GM12878 (cell line): ENCODE measurements at regions of chr2 and their contacts with region 1.

Region 1: DNA sequence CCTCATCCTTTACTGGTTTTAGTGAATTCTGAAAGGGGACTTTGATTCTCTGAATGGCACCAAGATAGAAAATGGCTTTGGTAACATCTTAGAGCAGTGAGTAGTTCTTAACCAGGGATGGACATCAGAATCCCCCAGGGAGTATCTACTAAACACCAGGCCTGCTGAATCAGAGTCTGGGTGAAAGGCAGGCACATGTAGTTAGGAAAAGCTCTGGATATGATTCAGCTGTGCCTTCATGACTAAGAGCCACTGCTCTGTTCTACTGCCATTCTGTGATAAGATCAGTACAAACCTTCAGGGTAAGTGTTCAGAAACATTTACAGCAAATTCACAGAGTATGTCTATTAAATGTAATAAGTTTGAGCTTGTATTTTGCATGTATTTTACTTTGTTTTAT is 46.2 kb upstream of the B3GNT2 start:
- DNase-seq: no peak
- ATAC-seq: peak; percentile 23
- H3K4me3 ChIP-seq: no peak overlapping the region; the same call in 1 of the 2 replicates
- H3K27ac ChIP-seq: peak overlapping the region; percentile 91
- H3K4me1 ChIP-seq: peaks cover 43% of the 10 kb centered on the region
- H3K27me3 ChIP-seq: no peaks in the 10 kb centered on the region
- CTCF ChIP-seq: no peak
- EP300 ChIP-seq: no peak
- POLR2A ChIP-seq: no peak
- RAD21 ChIP-seq: no peak

Region 2: DNA sequence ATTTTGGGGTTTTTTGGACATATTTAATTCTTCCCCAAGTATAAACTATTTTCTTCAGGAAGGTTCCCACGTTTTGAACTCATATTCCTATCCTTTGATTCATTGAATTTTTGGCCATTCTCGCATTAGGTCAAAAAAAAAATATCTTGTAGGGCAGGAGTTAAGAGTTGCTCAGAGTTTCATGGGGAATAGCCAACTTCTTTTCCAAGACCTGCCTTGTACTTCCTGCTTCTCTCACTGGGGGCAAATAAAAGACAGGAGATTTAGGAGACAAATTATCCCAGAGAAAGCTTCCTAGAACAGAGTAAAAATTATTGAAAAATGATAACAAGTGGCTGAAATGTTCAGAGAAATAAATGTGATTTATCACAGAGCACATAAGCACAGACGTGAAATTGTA is 1541.0 kb before region 1 on chr2:
- CTCF ChIA-PET with region 1: no interaction called
- POLR2A ChIA-PET with region 1: no interaction called
- RAD21 ChIA-PET with region 1: no interaction called
- SMC1A ChIA-PET with region 1: no interaction called
- in situ Hi-C with region 1: no loop called
- intact Hi-C with region 1: no loop called
- DNase-seq: no peak
- ATAC-seq: no peak
- H3K4me3 ChIP-seq: no peak overlapping the region
- H3K27ac ChIP-seq: no peak overlapping the region
- H3K4me1 ChIP-seq: no peaks in the 10 kb centered on the region
- H3K27me3 ChIP-seq: peaks cover 0 to 6% of the 10 kb centered on the region in 2 experiments; a peak in 2 of 4 replicates
- CTCF ChIP-seq: no peak
- EP300 ChIP-seq: no peak
- POLR2A ChIP-seq: no peak
- RAD21 ChIP-seq: no peak

Region 3: GRCh38 chr2:62014102-62014501 is 135.6 kb before region 1 on chr2:
- CTCF ChIA-PET with region 1: interaction called, 3 read pairs
- POLR2A ChIA-PET with region 1: no interaction called
- RAD21 ChIA-PET with region 1: interaction called, 10 read pairs
- SMC1A ChIA-PET with region 1: interaction called, 3 read pairs
- in situ Hi-C with region 1: no loop called
- intact Hi-C with region 1: no loop called
- DNase-seq: no peak
- ATAC-seq: peak; percentile 22; the same call in 1 of the 3 replicates
- H3K4me3 ChIP-seq: no peak overlapping the region
- H3K27ac ChIP-seq: no peak overlapping the region
- H3K4me1 ChIP-seq: peaks cover 8% of the 10 kb centered on the region; the same call in 1 of the 2 replicates
- H3K27me3 ChIP-seq: no peaks in the 10 kb centered on the region
- CTCF ChIP-seq: no peak
- EP300 ChIP-seq: no peak
- POLR2A ChIP-seq: no peak
- RAD21 ChIP-seq: no peak

Region 4: GRCh38 chr2:62055724-62056336 is 93.9 kb before region 1 on chr2:
- CTCF ChIA-PET with region 1: interaction called, 4 read pairs
- POLR2A ChIA-PET with region 1: no interaction called
- RAD21 ChIA-PET with region 1: interaction called, 13 read pairs
- SMC1A ChIA-PET with region 1: interaction called, 3 read pairs
- in situ Hi-C with region 1: no loop called
- intact Hi-C with region 1: no loop called
- DNase-seq: no peak
- ATAC-seq: peak; percentile 17; the same call in 2 of the 3 replicates
- H3K4me3 ChIP-seq: no peak overlapping the region
- H3K27ac ChIP-seq: no peak overlapping the region
- H3K4me1 ChIP-seq: peaks cover 18% of the 10 kb centered on the region
- H3K27me3 ChIP-seq: no peaks in the 10 kb centered on the region
- CTCF ChIP-seq: no peak
- EP300 ChIP-seq: no peak
- POLR2A ChIP-seq: no peak
- RAD21 ChIP-seq: no peak

Region 5: GRCh38 chr2:62195421-62196277 is 45.9 kb after region 1 on chr2 and contains the start of gene B3GNT2:
- CTCF ChIA-PET with region 1: interaction called, 6 read pairs
- POLR2A ChIA-PET with region 1: interaction called, 20 read pairs
- RAD21 ChIA-PET with region 1: interaction called, 63 read pairs
- SMC1A ChIA-PET with region 1: interaction called, 91 read pairs
- in situ Hi-C with region 1: no loop called
- intact Hi-C with region 1: loop called (anchors 2 kb)
- DNase-seq: no peak
- ATAC-seq: peak; percentile 63
- H3K4me3 ChIP-seq: peak within 1 kb of the TSS; percentile 86
- H3K27ac ChIP-seq: peak within 1 kb of the TSS; percentile 87
- H3K4me1 ChIP-seq: peaks cover 9% of the 10 kb centered on the region
- H3K27me3 ChIP-seq: no peaks in the 10 kb centered on the region
- CTCF ChIP-seq: no peak
- EP300 ChIP-seq: no peak
- POLR2A ChIP-seq: peak; percentile 91
- RAD21 ChIP-seq: no peak
- polyA plus RNA-seq, gene B3GNT2: 19.7 to 36.5 TPM

Region 6: DNA sequence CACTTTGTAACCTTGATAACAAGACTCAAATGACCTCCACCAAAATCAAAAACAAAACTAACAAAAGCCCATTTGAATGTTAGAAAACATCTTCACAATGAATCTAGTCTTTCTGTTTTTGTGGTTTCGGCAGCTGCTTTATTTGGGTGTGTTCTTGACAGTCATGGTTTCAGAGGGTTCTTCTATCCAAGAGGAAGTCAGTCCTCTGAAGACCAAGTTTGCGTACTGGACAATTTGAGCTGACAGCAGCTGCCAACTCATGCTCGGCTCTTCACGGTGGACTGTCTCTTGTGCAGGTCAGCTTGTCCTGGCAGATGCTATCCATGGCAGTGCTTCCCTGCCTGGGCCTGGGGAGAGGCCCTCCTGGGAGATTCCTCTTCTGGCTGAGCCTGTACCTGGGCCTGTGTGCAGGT is 265.3 kb after region 1 on chr2:
- CTCF ChIA-PET with region 1: interaction called, 35 read pairs
- POLR2A ChIA-PET with region 1: no interaction called
- RAD21 ChIA-PET with region 1: interaction called, 9 read pairs
- SMC1A ChIA-PET with region 1: interaction called, 11 read pairs
- in situ Hi-C with region 1: no loop called
- intact Hi-C with region 1: loop called (anchors 2 kb)
- DNase-seq: peak; percentile 78
- ATAC-seq: peak; percentile 85
- H3K4me3 ChIP-seq: peak overlapping the region; percentile 37; the same call in 1 of the 2 replicates
- H3K27ac ChIP-seq: peak overlapping the region; percentile 70
- H3K4me1 ChIP-seq: peaks cover 39% of the 10 kb centered on the region
- H3K27me3 ChIP-seq: no peaks in the 10 kb centered on the region
- CTCF ChIP-seq: no peak
- EP300 ChIP-seq: peak in 1 of 2 experiments; percentile 35; a peak in 1 of 4 replicates
- POLR2A ChIP-seq: no peak
- RAD21 ChIP-seq: peak; percentile 3; the same call in 1 of the 2 replicates